Activated CD4-positive, alpha-beta memory T cell treated with anti-CD3 and anti-CD28 coated beads, Interleukin-2, amount 10 ng/mL, durations not matched to agents 7 days and 5 days (primary cell): ENCODE measurements at regions of chr2 and their contacts with region 1.

Region 1: GRCh38 chr2:95022309-95023221 is 2.9 kb upstream of the MAL start:
- DNase-seq: peak; percentile 89
- H3K4me3 Mint-ChIP-seq: peak overlapping the region; percentile 78
- H3K27ac Mint-ChIP-seq: peak overlapping the region; percentile 84
- H3K4me1 Mint-ChIP-seq: peaks cover 56% of the 10 kb centered on the region
- H3K27me3 Mint-ChIP-seq: peaks cover 5% of the 10 kb centered on the region

Region 2: GRCh38 chr2:94986392-94986963 is 36.1 kb before region 1 on chr2:
- CTCF ChIA-PET with region 1: interaction called, 12 read pairs
- POLR2A ChIA-PET with region 1: no interaction called
- DNase-seq: peak; percentile 54
- H3K4me3 Mint-ChIP-seq: no peak overlapping the region
- H3K27ac Mint-ChIP-seq: no peak overlapping the region
- H3K4me1 Mint-ChIP-seq: peaks cover 5% of the 10 kb centered on the region
- H3K27me3 Mint-ChIP-seq: peaks cover 19% of the 10 kb centered on the region

Region 3: GRCh38 chr2:95004711-95005110 is 17.9 kb before region 1 on chr2:
- CTCF ChIA-PET with region 1: no interaction called
- POLR2A ChIA-PET with region 1: no interaction called
- DNase-seq: no peak
- H3K4me3 Mint-ChIP-seq: no peak overlapping the region
- H3K27ac Mint-ChIP-seq: no peak overlapping the region
- H3K4me1 Mint-ChIP-seq: no peaks in the 10 kb centered on the region
- H3K27me3 Mint-ChIP-seq: peaks cover 7% of the 10 kb centered on the region

Region 4: GRCh38 chr2:95062242-95063085 is 39.9 kb after region 1 on chr2:
- CTCF ChIA-PET with region 1: interaction called, 40 read pairs
- POLR2A ChIA-PET with region 1: interaction called, 50 read pairs
- DNase-seq: no peak
- H3K4me3 Mint-ChIP-seq: no peak overlapping the region
- H3K27ac Mint-ChIP-seq: peak overlapping the region; percentile 78
- H3K4me1 Mint-ChIP-seq: peaks cover 35% of the 10 kb centered on the region
- H3K27me3 Mint-ChIP-seq: no peaks in the 10 kb centered on the region

Region 5: GRCh38 chr2:95115418-95115817 is 92.9 kb after region 1 on chr2:
- CTCF ChIA-PET with region 1: interaction called, 226 read pairs
- POLR2A ChIA-PET with region 1: interaction called, 34 read pairs
- DNase-seq: peak; percentile 81
- H3K4me3 Mint-ChIP-seq: no peak overlapping the region
- H3K27ac Mint-ChIP-seq: peak overlapping the region; percentile 18
- H3K4me1 Mint-ChIP-seq: peaks cover 42% of the 10 kb centered on the region
- H3K27me3 Mint-ChIP-seq: no peaks in the 10 kb centered on the region

Region 6: GRCh38 chr2:95159690-95160449 is 137.3 kb after region 1 on chr2 and contains the start of gene ZNF514:
- CTCF ChIA-PET with region 1: interaction called, 14 read pairs
- POLR2A ChIA-PET with region 1: interaction called, 12 read pairs
- DNase-seq: peak; percentile 73
- H3K4me3 Mint-ChIP-seq: peak within 1 kb of the TSS; percentile 86
- H3K27ac Mint-ChIP-seq: peak within 1 kb of the TSS; percentile 76
- H3K4me1 Mint-ChIP-seq: peaks cover 23% of the 10 kb centered on the region
- H3K27me3 Mint-ChIP-seq: no peaks in the 10 kb centered on the region
- total RNA-seq, gene ZNF514: 12.9 to 13.4 TPM